Dendritic cell treated with granulocyte-macrophage colony-stimulating factor and Interleukin-4, amounts not matched to agents 40 ng/mL and 50 ng/mL, for 4 days (primary cell): ENCODE measurements at regions of chr14 and their contacts with region 1.

Region 1: DNA sequence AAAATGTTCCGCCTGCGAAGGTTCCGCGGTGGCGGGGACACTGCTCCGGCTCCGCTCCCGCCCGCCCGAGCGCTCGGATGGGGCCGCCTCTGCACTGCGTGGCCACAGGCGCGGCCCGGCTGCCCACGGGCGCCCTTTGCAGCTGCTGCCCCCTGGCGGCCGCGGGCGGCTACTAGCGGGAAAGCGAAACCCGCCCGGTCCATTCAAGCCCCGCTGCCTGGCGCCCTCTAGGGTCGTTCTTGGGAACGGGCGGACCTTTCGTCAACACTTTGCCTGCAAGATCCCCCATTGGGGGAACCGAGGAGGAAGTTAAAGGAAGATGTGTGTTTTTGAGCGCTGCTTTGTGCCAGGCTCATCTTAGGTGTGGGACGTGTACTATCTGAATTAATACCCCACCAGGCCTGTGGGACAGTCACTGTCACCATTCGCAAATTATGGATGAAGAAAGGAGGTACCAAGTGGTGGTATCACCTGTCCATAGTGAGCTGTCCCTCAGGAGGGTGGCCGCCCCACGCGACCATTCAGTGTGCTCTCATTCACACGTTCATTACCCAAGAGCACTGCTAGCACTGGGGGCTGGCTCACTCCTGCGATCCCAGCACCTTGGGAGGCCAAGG is 19.4 kb downstream of the GPR132 start:
- H3K4me3 Mint-ChIP-seq: peak overlapping the region; percentile 6
- H3K27ac Mint-ChIP-seq: no peak overlapping the region
- H3K4me1 Mint-ChIP-seq: peaks cover 46% of the 10 kb centered on the region
- H3K27me3 Mint-ChIP-seq: peaks cover 13% of the 10 kb centered on the region

Region 2: DNA sequence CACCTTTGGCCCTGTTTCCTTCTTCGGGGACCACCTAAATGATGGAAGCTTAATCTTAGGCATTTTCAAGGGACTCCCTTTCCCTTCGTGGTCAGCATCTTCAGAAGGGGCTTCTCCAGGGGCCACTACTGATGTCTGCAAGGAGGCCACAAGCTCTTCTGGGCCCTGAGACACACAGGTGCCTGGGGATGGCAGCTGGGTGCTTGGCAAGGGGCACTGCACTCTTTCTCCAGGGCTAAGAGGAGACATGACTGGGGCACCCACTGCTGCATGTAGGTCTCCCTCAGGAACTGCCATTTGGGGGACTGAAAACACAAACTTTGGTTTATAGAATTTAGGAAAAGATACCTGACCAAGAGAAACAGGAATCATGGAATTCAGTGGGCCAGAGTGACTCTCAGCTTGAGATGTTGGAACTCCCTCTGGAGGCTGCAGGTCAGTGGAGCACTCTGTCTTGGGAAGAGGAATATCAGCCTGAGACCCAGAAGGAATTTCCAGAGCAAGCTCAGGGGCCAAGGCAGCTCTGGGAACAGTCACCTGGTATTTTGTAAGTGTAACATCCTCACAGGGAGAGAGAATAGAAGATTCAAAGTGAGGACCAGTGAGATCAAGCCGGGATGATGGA is 105.2 kb before region 1 on chr14:
- intact Hi-C with region 1: no loop called
- H3K4me3 Mint-ChIP-seq: no peak overlapping the region
- H3K27ac Mint-ChIP-seq: no peak overlapping the region
- H3K4me1 Mint-ChIP-seq: no peaks in the 10 kb centered on the region
- H3K27me3 Mint-ChIP-seq: peaks cover 46% of the 10 kb centered on the region

Region 3: GRCh38 chr14:104976198-104977007 is 69.4 kb before region 1 on chr14:
- intact Hi-C with region 1: loop called (anchors 1 kb)
- H3K4me3 Mint-ChIP-seq: no peak overlapping the region
- H3K27ac Mint-ChIP-seq: no peak overlapping the region
- H3K4me1 Mint-ChIP-seq: peaks cover 21% of the 10 kb centered on the region
- H3K27me3 Mint-ChIP-seq: peaks cover 57% of the 10 kb centered on the region

Region 4: GRCh38 chr14:105012171-105012985 is 33.4 kb before region 1 on chr14:
- intact Hi-C with region 1: loop called (anchors 1 kb)
- H3K4me3 Mint-ChIP-seq: no peak overlapping the region
- H3K27ac Mint-ChIP-seq: no peak overlapping the region
- H3K4me1 Mint-ChIP-seq: peaks cover 44% of the 10 kb centered on the region
- H3K27me3 Mint-ChIP-seq: no peaks in the 10 kb centered on the region

Region 5: DNA sequence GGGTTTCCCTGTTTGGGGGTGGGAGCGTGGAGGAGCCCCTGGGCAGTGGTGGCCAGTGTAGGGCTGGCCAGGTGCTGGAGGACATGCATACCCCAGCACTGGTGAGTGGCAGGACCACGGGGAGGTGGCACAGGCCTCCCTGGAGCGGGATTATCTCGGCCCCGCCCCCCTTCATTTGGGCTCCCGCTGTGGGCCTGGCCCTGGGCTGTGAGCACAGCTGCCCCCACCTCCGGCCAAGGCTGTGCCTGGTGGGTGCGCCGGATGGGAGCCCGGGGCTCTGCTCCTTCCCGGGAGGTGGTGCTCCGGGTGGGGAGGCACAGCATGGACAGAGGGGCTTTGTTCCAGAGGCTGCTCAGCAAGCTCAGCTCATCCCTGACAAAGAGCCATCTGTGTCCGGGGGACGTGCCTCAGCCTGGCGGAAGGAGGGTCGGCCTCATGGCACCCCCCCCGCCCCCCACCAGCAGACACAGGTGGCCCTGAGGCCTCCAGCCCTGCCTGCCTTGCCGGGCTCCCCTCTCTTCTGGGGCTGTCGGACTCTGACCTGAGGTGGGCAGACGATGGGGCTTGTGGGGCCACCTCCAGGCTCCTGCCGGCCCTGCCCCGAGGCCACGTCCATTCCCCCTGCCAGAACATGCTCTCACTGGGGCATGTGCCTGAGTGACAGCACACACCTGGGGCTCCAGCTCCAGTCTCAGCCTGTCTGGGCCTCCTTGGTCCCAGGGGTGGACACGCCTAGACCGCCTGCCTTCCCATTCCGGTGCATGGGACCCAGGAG is 453.6 kb after region 1 on chr14:
- intact Hi-C with region 1: no loop called
- H3K4me3 Mint-ChIP-seq: no peak overlapping the region
- H3K27ac Mint-ChIP-seq: no peak overlapping the region
- H3K4me1 Mint-ChIP-seq: no peaks in the 10 kb centered on the region
- H3K27me3 Mint-ChIP-seq: peaks cover 10% of the 10 kb centered on the region